ENCODE measurements at regions of chr10 and their contacts with region 1.

Region 1: DNA sequence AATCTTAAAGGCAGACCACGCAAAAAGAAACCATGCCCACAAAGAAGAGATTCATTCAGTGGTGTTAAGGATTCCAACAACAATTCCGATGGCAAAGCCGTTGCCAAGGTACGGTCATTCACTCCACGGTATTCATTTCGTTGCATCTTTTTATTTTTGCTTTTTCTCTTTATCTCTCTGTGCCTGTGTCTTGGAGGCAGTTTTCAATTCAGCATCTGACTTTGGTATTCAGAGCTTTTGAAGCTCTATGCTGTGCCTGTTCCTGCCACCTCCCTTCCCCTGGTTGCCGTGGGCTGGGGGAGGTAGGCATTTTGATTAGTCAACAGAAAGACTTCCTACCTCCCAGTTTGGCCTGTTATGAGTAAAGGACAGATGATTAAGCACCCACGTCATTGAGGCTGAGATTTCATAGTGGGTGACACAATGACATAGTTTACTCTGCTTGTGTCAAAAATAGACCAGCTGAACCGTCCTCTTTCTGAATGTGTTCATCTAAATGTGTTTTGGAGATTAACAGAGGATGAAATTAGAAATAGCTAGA is 149.5 kb downstream of the ARID5B start:
- DNase-seq: peak; percentile 72
- H3K4me3 Mint-ChIP-seq: peak overlapping the region; percentile 97
- H3K27ac Mint-ChIP-seq: peak overlapping the region; percentile 99
- H3K4me1 Mint-ChIP-seq: peaks cover 86% of the 10 kb centered on the region
- H3K27me3 Mint-ChIP-seq: no peaks in the 10 kb centered on the region

Region 2: DNA sequence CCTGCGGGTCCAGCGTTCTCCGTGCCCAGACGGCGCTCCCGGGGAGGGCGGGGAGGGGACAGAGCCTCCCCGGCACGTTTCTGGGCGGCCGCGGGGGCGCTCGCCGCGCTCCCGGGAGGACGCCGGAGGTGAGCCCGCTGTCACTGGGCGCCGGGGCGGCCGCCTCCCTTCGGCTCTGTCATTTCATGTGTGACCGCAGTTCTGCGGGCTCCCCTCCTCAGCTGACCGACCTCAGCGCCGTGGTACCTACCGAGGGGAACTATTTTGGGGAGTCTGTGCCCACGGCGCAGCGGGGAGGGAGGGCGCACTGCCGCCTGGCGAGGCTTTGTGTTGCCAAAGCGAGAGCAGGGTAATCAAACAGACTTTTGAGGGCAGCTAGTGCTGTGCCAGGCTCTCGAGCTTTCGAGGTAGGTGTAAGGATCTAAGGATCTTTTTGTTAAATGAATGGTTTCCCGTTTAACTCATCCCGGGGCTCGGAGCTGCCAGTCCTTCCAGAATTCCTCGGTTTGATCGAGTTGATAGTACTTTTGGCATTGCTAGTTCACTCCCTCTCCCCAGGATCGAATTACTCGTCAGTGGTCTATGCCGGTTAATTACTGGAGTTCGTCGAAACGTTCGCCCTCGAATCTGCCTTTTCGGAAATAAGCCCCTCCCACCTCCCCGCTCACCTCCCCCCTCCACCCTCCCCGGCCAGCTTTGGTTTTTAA is 147.6 kb before region 1 on chr10:
- intact Hi-C with region 1: loop called (anchors 1 kb)
- DNase-seq: peak; percentile 68
- H3K4me3 Mint-ChIP-seq: peak overlapping the region; percentile 95
- H3K27ac Mint-ChIP-seq: peak overlapping the region; percentile 93
- H3K4me1 Mint-ChIP-seq: peaks cover 40% of the 10 kb centered on the region
- H3K27me3 Mint-ChIP-seq: no peaks in the 10 kb centered on the region

Region 3: DNA sequence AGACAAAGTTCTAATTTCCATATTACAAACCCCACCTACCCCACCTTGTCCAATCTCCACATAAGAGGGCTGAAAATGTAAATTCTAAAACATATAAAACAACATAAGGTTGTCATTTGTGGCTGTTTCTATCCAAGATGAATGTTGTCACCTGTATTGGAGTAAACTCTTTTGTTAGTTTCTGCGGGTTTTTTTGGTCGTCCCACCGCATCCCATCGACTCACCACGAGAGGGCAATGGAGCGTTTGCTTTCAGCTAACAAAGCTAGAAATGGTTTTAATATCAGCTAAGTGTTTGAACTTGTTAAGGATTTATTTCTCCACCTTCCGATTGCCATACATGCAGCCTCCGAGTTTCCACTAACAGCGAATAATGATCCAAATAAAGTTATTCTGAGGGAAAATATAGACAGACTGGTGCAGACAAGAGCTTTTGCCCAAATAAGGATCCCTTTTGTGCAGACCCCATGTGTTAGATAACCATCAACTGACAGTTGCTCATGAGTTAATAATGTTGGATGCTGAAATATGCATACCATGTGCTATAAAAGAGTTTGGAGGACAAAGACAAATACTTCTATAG is 12.3 kb before region 1 on chr10:
- intact Hi-C with region 1: loop called (anchors 1 kb)
- DNase-seq: peak; percentile 71
- H3K4me3 Mint-ChIP-seq: peak overlapping the region; percentile 51
- H3K27ac Mint-ChIP-seq: peak overlapping the region; percentile 72
- H3K4me1 Mint-ChIP-seq: peaks cover 67% of the 10 kb centered on the region
- H3K27me3 Mint-ChIP-seq: no peaks in the 10 kb centered on the region

Region 4: GRCh38 chr10:62183442-62183841 is 132.5 kb after region 1 on chr10:
- intact Hi-C with region 1: loop called (anchors 1 kb)
- DNase-seq: peak; percentile 52
- H3K4me3 Mint-ChIP-seq: no peak overlapping the region
- H3K27ac Mint-ChIP-seq: peak overlapping the region; percentile 96
- H3K4me1 Mint-ChIP-seq: peaks cover 76% of the 10 kb centered on the region
- H3K27me3 Mint-ChIP-seq: no peaks in the 10 kb centered on the region

Region 5: DNA sequence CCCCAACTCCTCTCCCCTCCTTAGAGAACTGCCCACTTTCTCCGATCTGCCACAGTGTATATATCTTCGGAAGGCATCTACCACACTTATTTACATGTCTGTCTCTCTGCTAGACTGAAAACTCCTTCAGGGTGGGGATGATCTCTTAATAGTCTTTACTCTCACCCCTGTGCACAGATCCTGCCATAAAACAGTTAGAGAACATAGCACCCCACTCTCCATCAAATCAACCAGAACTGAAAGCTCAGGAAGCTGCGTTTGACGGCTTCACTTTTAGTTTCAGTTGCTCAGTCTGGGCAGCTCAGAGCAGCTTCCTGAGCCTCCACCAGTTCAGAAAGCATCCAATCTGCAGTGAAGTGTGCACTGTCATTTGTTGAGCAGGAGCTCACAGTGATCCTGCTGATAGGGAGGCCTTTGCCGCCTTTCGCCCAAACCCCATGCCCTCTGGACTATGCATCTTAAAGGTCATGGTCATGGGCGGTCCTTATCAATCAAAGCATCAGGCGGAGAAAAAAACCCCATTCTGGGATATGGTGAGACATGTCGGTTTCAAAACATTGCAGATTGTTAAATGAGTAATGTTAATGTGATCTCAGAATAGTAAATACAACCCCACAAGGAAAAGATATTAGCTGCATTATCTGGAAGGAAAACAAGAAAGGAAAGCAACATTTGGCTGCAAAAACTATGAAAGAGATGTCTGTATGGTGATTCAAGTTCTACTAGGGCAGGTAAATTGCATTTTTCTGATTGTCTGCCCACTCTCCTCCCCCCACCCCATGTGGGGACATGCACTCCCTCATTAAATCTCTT is 586.5 kb after region 1 on chr10:
- intact Hi-C with region 1: loop called (anchors 10 kb)
- DNase-seq: peak; percentile 75
- H3K4me3 Mint-ChIP-seq: no peak overlapping the region
- H3K27ac Mint-ChIP-seq: no peak overlapping the region
- H3K4me1 Mint-ChIP-seq: peaks cover 37% of the 10 kb centered on the region
- H3K27me3 Mint-ChIP-seq: no peaks in the 10 kb centered on the region

Region 6: DNA sequence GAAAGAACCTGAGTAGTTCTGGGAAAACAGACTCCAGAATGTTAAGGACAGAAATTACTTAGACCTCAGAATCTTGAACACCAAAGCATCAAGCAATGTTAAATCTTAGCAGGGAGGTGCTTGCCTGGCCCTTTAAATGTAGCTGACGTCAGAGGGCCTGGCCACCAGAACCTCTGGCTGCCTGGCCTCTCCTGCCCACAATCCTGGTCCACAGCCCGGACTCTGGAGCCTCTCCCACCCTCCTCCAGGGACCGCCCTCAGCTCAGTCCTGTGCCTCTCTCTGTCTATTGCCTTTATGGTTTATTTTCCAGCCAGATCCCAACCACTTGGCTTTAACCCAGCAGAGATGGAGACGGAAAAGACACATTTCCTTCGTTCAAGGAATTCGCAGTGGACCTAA is 807.4 kb after region 1 on chr10:
- intact Hi-C with region 1: loop called (anchors 2 kb)
- DNase-seq: no peak
- H3K4me3 Mint-ChIP-seq: no peak overlapping the region
- H3K27ac Mint-ChIP-seq: no peak overlapping the region
- H3K4me1 Mint-ChIP-seq: peaks cover 78% of the 10 kb centered on the region
- H3K27me3 Mint-ChIP-seq: no peaks in the 10 kb centered on the region

Measured in activated T-helper 2 cell treated with anti-CD3 and anti-CD28 coated beads, Interferon-gamma antibody, Interleukin-2, Interleukin-4, amounts not matched to agents 10 μg/mL and 5 μg/mL and 100 μg/mL, durations not matched to agents 14 hours and 24 hours and 36 hours (primary cell).